ENCODE measurements at regions of chr4 and their contacts with region 1.

Region 1: DNA sequence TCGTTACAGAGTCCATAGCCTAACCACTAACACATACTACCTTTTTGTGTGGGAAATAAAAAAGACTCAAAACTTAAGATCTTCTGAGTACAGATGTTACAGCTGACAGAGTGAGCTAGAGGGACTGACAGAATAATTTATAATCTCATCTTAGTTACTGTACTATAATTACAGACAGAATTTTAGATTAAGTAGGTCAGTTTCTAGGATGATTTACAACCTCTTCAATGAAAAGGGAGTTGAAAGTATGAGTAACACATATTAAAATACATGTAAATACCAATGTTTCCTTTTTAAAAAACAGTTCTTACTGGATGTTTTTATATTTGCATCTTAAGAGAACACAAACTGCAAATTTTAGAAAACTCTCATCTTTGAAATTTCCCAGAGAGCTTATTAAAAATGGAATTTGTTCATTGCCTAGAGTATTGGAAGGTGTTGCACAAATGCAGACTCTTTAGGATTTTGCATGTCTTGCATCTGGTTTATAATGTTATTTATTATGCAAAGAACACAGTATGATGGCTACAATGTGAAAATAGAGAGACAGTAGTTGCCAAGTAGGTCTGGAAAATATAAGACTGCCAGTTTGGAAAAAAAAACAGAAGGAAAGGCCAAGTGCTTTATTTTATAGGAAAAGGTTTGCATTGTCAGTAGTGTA is 24.2 kb upstream of the CCNG2 start:
- DNase-seq: no peak
- ATAC-seq: no peak
- H3K4me3 Mint-ChIP-seq: no peak overlapping the region
- H3K27ac Mint-ChIP-seq: no peak overlapping the region
- H3K4me1 Mint-ChIP-seq: peaks cover 17% of the 10 kb centered on the region
- H3K27me3 Mint-ChIP-seq: no peaks in the 10 kb centered on the region; the same call in 1 of the 2 replicates
- CTCF ChIP-seq: no peak

Region 2: DNA sequence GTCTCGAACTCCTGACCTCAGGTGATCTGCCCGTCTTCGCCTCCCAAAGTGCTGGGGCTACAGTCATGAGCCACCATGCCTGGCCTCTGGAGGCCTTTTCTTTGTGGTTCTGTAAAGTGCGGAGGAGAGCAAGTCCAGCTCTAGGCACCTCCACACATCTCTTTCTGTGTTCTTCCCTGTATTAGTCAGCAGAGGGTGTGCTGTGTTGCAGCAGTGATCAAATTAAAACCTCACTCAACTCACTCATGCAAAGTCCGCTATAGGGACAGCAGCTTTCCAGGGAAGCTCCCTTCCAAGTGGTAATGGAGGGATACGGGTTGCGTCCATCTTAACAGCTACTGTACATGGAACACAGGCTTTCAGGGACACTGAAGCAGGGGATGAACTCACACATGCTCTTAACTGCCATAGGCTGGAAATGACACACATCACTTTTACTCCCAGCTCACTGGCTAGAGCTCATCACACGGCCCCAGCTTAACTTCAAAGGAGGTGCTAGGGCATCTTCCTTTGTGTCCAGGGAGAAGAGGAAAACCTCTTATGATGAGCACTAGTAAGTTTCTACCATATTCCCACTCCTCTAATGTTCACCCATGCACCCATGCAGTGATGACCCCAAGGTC is 11.8 kb before region 1 on chr4:
- CTCF ChIA-PET with region 1: interaction called, 11 read pairs
- POLR2A ChIA-PET with region 1: no interaction called
- DNase-seq: no peak
- ATAC-seq: peak; percentile 90
- H3K4me3 Mint-ChIP-seq: no peak overlapping the region
- H3K27ac Mint-ChIP-seq: no peak overlapping the region
- H3K4me1 Mint-ChIP-seq: peaks cover 33% of the 10 kb centered on the region
- H3K27me3 Mint-ChIP-seq: peaks cover 3% of the 10 kb centered on the region
- CTCF ChIP-seq: no peak

Region 3: GRCh38 chr4:77777135-77777807 is 644.5 kb after region 1 on chr4:
- CTCF ChIA-PET with region 1: no interaction called
- POLR2A ChIA-PET with region 1: no interaction called
- DNase-seq: no peak
- ATAC-seq: no peak
- H3K4me3 Mint-ChIP-seq: no peak overlapping the region
- H3K27ac Mint-ChIP-seq: no peak overlapping the region
- H3K4me1 Mint-ChIP-seq: peaks cover 27% of the 10 kb centered on the region
- H3K27me3 Mint-ChIP-seq: no peaks in the 10 kb centered on the region
- CTCF ChIP-seq: no peak

Measured in WTC11 (cell line).